Activated naive CD4-positive, alpha-beta T cell treated with anti-CD3 and anti-CD28 coated beads, Interleukin-2, amount 10 ng/mL, durations not matched to agents 7 days and 5 days (primary cell): ENCODE measurements at regions of chr16 and their contacts with region 1.

Region 1: DNA sequence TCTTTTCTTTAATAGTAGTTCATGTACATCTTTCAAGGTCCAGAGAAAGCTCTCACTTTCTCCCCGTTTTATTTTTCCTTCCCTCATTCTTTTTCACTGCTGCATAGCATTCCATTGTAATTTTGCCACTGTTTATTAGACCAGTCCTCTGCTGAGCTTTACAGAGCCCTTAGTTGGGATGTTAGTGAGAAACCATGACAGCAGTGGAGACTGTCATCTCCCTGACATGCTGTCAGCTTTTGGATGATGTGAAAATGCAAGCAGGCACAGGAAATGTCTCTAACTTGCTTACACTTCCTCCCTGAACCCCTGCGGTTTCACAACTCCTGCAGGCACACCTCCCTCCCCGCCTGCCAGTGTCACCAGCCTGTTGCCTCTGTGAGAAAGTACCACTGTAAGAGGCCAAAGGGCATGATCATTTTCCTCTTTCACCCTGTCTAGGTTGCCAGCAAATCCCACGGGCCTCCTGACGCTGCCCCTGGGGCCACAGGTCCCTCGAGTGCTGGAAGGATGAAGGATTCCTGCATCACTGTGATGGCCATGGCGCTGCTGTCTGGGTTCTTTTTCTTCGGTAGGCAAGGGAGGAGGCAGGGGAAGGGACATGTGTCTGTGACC is at the start of gene ITGAL:
- DNase-seq: peak; percentile 91
- H3K4me3 Mint-ChIP-seq: peak within 1 kb of the TSS; percentile 99
- H3K27ac Mint-ChIP-seq: peak within 1 kb of the TSS; percentile 97
- H3K4me1 Mint-ChIP-seq: peaks cover 73% of the 10 kb centered on the region
- H3K27me3 Mint-ChIP-seq: no peaks in the 10 kb centered on the region

Region 2: DNA sequence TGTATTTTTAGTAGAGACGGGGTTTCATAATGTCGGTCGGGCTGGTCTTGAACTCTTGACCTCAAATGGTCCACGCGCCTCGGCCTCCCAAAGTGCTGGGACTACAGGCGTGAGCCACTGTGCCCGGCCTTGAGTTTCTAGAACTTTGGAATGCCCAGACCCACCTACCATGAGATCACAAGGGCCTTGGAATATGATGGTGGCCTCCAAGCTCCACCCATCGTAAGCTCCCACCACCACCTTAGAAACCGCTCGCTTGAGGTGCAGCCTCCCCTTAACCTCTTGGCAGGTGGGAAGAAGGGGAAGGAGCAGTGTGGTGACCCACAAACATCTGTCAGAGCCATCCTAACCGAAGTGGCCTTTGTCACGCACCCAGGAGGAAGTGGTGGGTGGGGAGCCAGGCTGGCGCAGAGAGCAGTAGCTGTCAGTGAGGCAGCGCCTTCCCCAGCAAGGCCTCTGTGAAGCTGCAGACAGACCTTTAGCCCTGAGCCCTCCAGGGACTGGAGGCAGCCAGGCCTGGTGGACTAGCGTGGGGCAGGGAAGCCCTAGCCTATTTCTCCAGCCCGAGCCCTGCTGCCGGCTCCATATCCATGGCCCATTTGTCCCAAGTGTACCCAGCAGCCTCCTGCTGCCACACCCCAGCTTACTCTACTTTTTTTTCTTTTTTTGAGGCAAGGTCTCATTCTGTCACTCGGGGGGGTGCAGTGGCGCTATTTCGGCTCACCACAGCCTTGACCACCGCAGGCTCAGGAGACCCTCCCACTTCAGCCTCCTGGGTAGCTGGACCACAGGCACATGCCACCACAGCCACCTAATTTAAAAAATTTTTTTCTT is 13.7 kb before region 1 on chr16:
- CTCF ChIA-PET with region 1: interaction called, 57 read pairs
- DNase-seq: peak; percentile 94
- H3K4me3 Mint-ChIP-seq: peak overlapping the region; percentile 66
- H3K27ac Mint-ChIP-seq: peak overlapping the region; percentile 98
- H3K4me1 Mint-ChIP-seq: peaks cover 87% of the 10 kb centered on the region
- H3K27me3 Mint-ChIP-seq: peaks cover 4% of the 10 kb centered on the region